ENCODE measurements at regions of chr12 and their contacts with region 1.

Region 1: DNA sequence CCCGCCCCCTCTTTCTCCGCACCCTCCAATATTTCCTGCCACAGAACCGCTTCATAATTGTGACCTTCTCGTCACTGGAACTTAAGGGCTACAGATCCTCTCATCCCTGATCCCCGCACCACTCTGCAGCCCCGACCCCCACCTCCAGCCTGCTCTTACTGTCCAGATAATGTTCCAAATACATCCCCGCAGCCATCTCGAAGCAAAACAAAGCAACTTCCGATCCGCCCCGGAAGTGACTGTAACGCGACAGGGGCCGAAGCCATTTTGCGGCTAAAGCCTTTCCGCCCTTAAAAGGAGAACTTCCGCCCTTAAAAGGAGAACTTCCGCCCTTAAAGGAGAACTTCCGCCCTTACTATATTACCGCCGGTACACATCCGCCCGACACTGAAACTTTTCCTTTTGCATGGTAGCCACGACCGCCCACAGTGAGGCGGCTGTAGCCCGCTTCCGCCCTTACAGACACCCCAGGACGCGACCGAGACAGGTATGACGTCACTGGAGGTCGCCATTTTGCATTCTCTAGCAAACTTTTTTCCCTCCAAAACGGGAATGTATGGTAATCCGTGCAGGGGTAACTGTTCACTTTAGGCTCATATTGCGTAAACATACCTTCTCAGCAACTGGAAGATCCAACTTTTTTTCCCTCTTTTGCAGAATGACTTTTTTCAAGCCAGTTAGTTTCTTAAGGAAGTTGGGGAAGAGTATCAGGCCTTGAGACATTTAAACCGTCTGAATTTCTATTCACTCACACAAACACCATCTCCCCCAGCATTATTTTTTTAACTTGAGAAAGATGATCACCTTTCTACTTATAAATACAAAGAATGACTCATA is at the start of gene ING4:
- DNase-seq: peak; percentile 95
- H3K4me3 Mint-ChIP-seq: peak within 1 kb of the TSS; percentile 89
- H3K27ac Mint-ChIP-seq: peak within 1 kb of the TSS; percentile 91
- H3K4me1 Mint-ChIP-seq: peaks cover 30% of the 10 kb centered on the region
- H3K27me3 Mint-ChIP-seq: no peaks in the 10 kb centered on the region
- total RNA-seq, gene ING4: 14.6 and 15.0 TPM in 2 replicates

Region 2: GRCh38 chr12:6554168-6555017 is 108.7 kb before region 1 on chr12:
- intact Hi-C with region 1: loop called (anchors 1 kb)
- DNase-seq: no peak
- H3K4me3 Mint-ChIP-seq: peak overlapping the region; percentile 88
- H3K27ac Mint-ChIP-seq: peak overlapping the region; percentile 61
- H3K4me1 Mint-ChIP-seq: peaks cover 36% of the 10 kb centered on the region
- H3K27me3 Mint-ChIP-seq: no peaks in the 10 kb centered on the region

Region 3: GRCh38 chr12:6613776-6614512 is 49.2 kb before region 1 on chr12:
- intact Hi-C with region 1: loop called (anchors 1 kb)
- DNase-seq: no peak
- H3K4me3 Mint-ChIP-seq: no peak overlapping the region
- H3K27ac Mint-ChIP-seq: peak overlapping the region; percentile 50
- H3K4me1 Mint-ChIP-seq: peaks cover 33% of the 10 kb centered on the region
- H3K27me3 Mint-ChIP-seq: no peaks in the 10 kb centered on the region

Region 4: DNA sequence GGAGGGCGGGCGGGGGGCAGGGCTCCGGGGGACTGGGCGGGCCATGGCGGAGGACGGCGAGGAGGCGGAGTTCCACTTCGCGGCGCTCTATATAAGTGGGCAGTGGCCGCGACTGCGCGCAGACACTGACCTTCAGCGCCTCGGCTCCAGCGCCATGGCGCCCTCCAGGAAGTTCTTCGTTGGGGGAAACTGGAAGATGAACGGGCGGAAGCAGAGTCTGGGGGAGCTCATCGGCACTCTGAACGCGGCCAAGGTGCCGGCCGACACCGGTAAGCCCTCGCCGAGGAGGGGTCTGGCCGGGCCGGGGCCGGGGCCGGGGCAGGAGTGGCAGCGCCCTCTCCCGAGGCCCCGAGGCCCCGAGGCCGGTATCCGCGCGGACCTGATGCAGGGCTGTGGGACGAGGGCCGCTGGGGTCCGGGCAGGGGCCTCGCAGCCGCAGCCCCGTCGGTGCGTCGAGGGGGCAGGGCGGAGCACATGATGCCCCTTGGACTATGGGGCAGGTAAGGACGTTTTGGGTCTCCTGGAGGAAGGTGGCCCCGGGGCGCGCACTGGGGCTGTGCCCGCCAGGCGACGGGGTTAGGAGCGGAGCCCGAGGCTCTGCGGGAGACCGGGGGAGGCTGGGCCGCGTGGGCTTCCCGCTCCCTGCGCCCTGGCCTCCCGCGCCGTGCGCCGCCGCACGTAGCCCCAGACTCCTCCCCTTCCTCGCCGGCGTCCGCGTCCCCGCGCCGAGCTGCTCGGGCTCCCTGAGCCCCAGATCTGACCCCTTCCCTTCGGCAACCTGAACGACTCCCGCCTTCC is 204.5 kb after region 1 on chr12 and contains the start of gene TPI1:
- intact Hi-C with region 1: loop called (anchors 5 kb)
- DNase-seq: peak; percentile 75
- H3K4me3 Mint-ChIP-seq: peak within 1 kb of the TSS; percentile 96
- H3K27ac Mint-ChIP-seq: peak within 1 kb of the TSS; percentile 99
- H3K4me1 Mint-ChIP-seq: peaks cover 53% of the 10 kb centered on the region
- H3K27me3 Mint-ChIP-seq: no peaks in the 10 kb centered on the region
- total RNA-seq, gene TPI1: 1,427 and 1,438 TPM in 2 replicates

Measured in activated T-helper 1 cell treated with anti-CD3 and anti-CD28 coated beads, Interleukin-12 subunit alpha, Interleukin-12 subunit beta, Interleukin-2, Interleukin-4 antibody, amounts not matched to agents 30 ng/mL and 10 ng/mL and 1 ng/mL, durations not matched to agents 14 hours and 24 hours and 36 hours (primary cell).